Posterior cingulate gyrus (tissue), 11 donors: ENCODE measurements at regions of chr15 and their contacts with region 1.

Region 1: GRCh38 chr15:41230650-41231533 is at the starts of genes CHP1 and EXD1:
- DNase-seq: peak; percentile 96 to 100 (median 98)

Region 2: GRCh38 chr15:41116116-41116871 is 114.6 kb before region 1 on chr15 and contains the start of gene INO80:
- intact Hi-C with region 1: loop called (anchors 2 kb)
- DNase-seq: peak; percentile 91 to 99 (median 96)

Region 3: DNA sequence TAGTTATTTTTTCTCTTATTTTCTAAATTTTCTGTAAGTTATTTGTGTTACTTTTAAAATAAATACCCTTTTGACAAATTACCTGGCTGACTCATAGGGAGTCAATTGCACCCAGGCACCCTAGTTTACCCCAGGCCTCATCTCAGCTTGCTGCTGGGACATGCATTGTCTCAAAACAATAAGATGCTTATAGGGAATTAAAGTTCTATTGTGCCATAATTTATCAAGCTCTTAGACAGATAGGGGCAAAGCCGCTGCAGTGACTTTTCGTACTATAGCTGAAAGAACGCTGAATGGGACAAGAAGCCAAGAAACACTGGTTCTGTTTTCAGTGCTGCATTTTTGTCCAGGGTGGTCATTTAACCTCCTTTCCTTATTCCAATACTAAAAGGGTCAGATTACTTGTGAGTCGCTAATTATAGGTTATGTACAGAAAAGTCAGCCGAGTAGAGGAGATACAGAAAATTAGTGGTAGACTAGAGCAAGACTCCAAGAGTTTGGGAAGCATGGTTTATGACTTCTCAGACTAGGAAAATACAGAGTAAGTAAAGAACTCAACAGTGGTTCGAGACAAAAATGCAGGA is 50.6 kb before region 1 on chr15:
- intact Hi-C with region 1: no loop called
- DNase-seq: no peak

Region 4: GRCh38 chr15:41276821-41277220 is 45.9 kb after region 1 on chr15:
- intact Hi-C with region 1: loop called (anchors 5 kb)
- DNase-seq: no peak

Region 5: DNA sequence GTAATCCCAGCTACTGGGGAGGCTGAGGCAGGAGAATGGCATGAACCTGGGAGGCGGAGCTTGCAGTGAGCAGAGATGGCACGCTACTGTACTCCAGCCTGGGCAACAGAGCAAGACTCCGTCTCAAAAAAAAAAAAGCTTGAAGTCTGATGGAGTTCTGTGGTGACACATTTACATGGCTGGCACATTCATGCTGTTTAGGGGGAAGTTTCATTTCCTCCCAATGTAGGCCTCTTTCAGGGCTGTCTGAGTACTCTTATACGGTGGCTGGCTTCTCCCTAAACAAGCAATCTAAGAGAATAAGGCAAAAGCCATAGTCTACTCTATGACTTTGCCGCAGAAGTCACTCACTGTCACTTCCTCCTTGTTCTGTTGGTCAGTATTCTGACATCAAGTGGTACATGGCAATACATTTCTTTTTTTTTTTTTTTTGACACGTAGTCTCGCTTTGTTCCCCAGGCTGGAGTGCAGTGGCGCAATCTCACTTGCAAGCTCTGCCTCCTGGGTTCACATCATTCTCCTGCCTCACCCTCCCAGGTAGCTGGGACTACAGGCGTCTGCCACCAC is 60.3 kb after region 1 on chr15:
- intact Hi-C with region 1: no loop called
- DNase-seq: peak in 1 of 10 donors; percentile 45